ENCODE measurements at regions of chr2 and their contacts with region 1.

Region 1: GRCh38 chr2:127884436-127885345 is 1.1 kb downstream of the AMMECR1L start:
- DNase-seq: no peak
- ATAC-seq: no peak
- H3K4me3 ChIP-seq: peak overlapping the region; percentile 78
- H3K27ac ChIP-seq: peak overlapping the region; percentile 87
- H3K4me1 ChIP-seq: peaks cover 26% of the 10 kb centered on the region
- H3K27me3 ChIP-seq: no peaks in the 10 kb centered on the region
- CTCF ChIP-seq: no peak

Region 2: GRCh38 chr2:127157651-127158470 is 726.8 kb before region 1 on chr2:
- intact Hi-C with region 1: no loop called
- DNase-seq: peak; percentile 57 to 87
- ATAC-seq: peak; percentile 29 to 72 (median 68)
- H3K4me3 ChIP-seq: no peak overlapping the region
- H3K27ac ChIP-seq: peak overlapping the region; percentile 89
- H3K4me1 ChIP-seq: peaks cover 27% of the 10 kb centered on the region
- H3K27me3 ChIP-seq: no peaks in the 10 kb centered on the region
- CTCF ChIP-seq: peak; percentile 31

Region 3: GRCh38 chr2:127582863-127583861 is 301.5 kb before region 1 on chr2:
- intact Hi-C with region 1: no loop called
- DNase-seq: peak in 1 of 2 donors; percentile 42
- ATAC-seq: no peak
- H3K4me3 ChIP-seq: no peak overlapping the region
- H3K27ac ChIP-seq: no peak overlapping the region
- H3K4me1 ChIP-seq: no peaks in the 10 kb centered on the region
- H3K27me3 ChIP-seq: no peaks in the 10 kb centered on the region
- CTCF ChIP-seq: no peak

Region 4: GRCh38 chr2:127961729-127962128 is 77.0 kb after region 1 on chr2:
- intact Hi-C with region 1: loop called in 1 of 2 experiments (anchors 5 kb)
- DNase-seq: no peak
- ATAC-seq: peak; percentile 78 to 95 (median 90)
- H3K4me3 ChIP-seq: no peak overlapping the region
- H3K27ac ChIP-seq: no peak overlapping the region
- H3K4me1 ChIP-seq: peaks cover 8% of the 10 kb centered on the region
- H3K27me3 ChIP-seq: no peaks in the 10 kb centered on the region
- CTCF ChIP-seq: no peak

Region 5: GRCh38 chr2:127968610-127969339 is 84.1 kb after region 1 on chr2:
- intact Hi-C with region 1: loop called (anchors 5 kb)
- DNase-seq: peak; percentile 84 to 91
- ATAC-seq: peak; percentile 96 to 98 (median 98)
- H3K4me3 ChIP-seq: peak overlapping the region; percentile 10
- H3K27ac ChIP-seq: peak overlapping the region; percentile 93
- H3K4me1 ChIP-seq: peaks cover 11% of the 10 kb centered on the region
- H3K27me3 ChIP-seq: no peaks in the 10 kb centered on the region
- CTCF ChIP-seq: no peak

Region 6: GRCh38 chr2:128027801-128028667 is 143.3 kb after region 1 on chr2 and contains the start of gene SAP130:
- intact Hi-C with region 1: loop called in 1 of 2 experiments (anchors 10 kb)
- DNase-seq: peak; percentile 99
- ATAC-seq: peak; percentile 92 to 94 (median 92)
- H3K4me3 ChIP-seq: peak within 1 kb of the TSS; percentile 83
- H3K27ac ChIP-seq: peak within 1 kb of the TSS; percentile 93
- H3K4me1 ChIP-seq: peaks cover 7% of the 10 kb centered on the region
- H3K27me3 ChIP-seq: no peaks in the 10 kb centered on the region
- CTCF ChIP-seq: no peak
- total RNA-seq, gene SAP130: 10.5 to 14.3 (median 13.2) TPM

Region 7: GRCh38 chr2:128090945-128091725 is 206.4 kb after region 1 on chr2 and contains the start of gene UGGT1:
- intact Hi-C with region 1: loop called (anchors 5 to 10 kb)
- DNase-seq: peak; percentile 94 to 98
- ATAC-seq: peak; percentile 99
- H3K4me3 ChIP-seq: peak within 1 kb of the TSS; percentile 96
- H3K27ac ChIP-seq: peak within 1 kb of the TSS; percentile 86
- H3K4me1 ChIP-seq: peaks cover 17% of the 10 kb centered on the region
- H3K27me3 ChIP-seq: no peaks in the 10 kb centered on the region
- CTCF ChIP-seq: no peak
- total RNA-seq, gene UGGT1: 31.2 to 41.7 (median 37.7) TPM